ENCODE measurements at regions of chr1 and their contacts with region 1.

Region 1: DNA sequence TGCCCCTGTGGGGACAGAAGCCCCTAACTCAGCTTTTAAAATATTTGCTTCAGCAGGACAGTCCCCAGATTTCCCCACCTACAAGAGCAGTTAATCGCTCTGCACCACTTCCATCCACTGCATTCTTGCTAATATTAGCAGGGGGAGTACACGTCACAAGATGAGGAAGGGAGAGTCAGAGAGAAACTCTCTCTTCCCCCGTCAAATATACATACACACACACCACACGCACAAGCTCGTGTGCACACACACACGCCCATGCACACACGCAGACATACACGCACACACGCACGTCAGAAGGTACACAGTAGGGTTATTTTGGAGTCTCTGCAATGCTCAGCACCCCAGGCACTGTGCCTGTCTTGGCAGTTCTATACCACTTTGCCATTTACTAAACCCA is 2.1 kb downstream of the CLCA1 start:
- DNase-seq: no peak
- H3K4me3 ChIP-seq: no peak overlapping the region
- H3K27ac ChIP-seq: no peak overlapping the region
- H3K4me1 ChIP-seq: no peaks in the 10 kb centered on the region
- H3K27me3 ChIP-seq: no peaks in the 10 kb centered on the region
- CTCF ChIP-seq: no peak

Region 2: GRCh38 chr1:86741947-86742572 is 271.2 kb after region 1 on chr1:
- CTCF ChIA-PET with region 1: no interaction called
- dilution Hi-C with region 1: no loop called
- in situ Hi-C with region 1: no loop called
- intact Hi-C with region 1: loop called (anchors 5 kb)
- DNase-seq: peak; percentile 12
- H3K4me3 ChIP-seq: no peak overlapping the region
- H3K27ac ChIP-seq: no peak overlapping the region
- H3K4me1 ChIP-seq: no peaks in the 10 kb centered on the region
- H3K27me3 ChIP-seq: no peaks in the 10 kb centered on the region
- CTCF ChIP-seq: peak; percentile 56 to 65

Measured in mammary epithelial cell (primary cell).